ENCODE measurements at regions of chr11 and their contacts with region 1.

Region 1: GRCh38 chr11:72091005-72091691 is 10.5 kb downstream of the LRRC51 start:
- DNase-seq: peak; percentile 52 to 67
- ATAC-seq: peak; percentile 84 to 93
- H3K4me3 ChIP-seq: no peak overlapping the region
- H3K27ac ChIP-seq: peak overlapping the region in 2 of 4 donors; percentile 12 to 18
- H3K4me1 ChIP-seq: peaks cover 4 to 10% of the 10 kb centered on the region in 2 donors
- H3K27me3 ChIP-seq: no peaks in the 10 kb centered on the region
- CTCF ChIP-seq: peak; percentile 84 to 91 (median 88)
- POLR2A ChIP-seq: no peak

Region 2: GRCh38 chr11:71977743-71978418 is 113.3 kb before region 1 on chr11:
- in situ Hi-C with region 1: no loop called
- intact Hi-C with region 1: loop called (anchors 1 kb)
- DNase-seq: peak in 1 of 2 donors; percentile 45
- ATAC-seq: peak; percentile 54 to 79
- H3K4me3 ChIP-seq: no peak overlapping the region
- H3K27ac ChIP-seq: no peak overlapping the region
- H3K4me1 ChIP-seq: peaks cover 3 to 8% of the 10 kb centered on the region in 2 donors
- H3K27me3 ChIP-seq: no peaks in the 10 kb centered on the region
- CTCF ChIP-seq: peak; percentile 39 to 75 (median 69)
- POLR2A ChIP-seq: no peak

Region 3: GRCh38 chr11:72024069-72024754 is 66.9 kb before region 1 on chr11:
- in situ Hi-C with region 1: loop called (anchors 5 to 10 kb)
- intact Hi-C with region 1: loop called (anchors 1 kb)
- DNase-seq: no peak
- ATAC-seq: no peak
- H3K4me3 ChIP-seq: no peak overlapping the region
- H3K27ac ChIP-seq: peak overlapping the region in 1 of 4 donors; percentile 40
- H3K4me1 ChIP-seq: peaks cover 23 to 29% of the 10 kb centered on the region in 2 donors
- H3K27me3 ChIP-seq: no peaks in the 10 kb centered on the region
- CTCF ChIP-seq: no peak
- POLR2A ChIP-seq: no peak

Region 4: DNA sequence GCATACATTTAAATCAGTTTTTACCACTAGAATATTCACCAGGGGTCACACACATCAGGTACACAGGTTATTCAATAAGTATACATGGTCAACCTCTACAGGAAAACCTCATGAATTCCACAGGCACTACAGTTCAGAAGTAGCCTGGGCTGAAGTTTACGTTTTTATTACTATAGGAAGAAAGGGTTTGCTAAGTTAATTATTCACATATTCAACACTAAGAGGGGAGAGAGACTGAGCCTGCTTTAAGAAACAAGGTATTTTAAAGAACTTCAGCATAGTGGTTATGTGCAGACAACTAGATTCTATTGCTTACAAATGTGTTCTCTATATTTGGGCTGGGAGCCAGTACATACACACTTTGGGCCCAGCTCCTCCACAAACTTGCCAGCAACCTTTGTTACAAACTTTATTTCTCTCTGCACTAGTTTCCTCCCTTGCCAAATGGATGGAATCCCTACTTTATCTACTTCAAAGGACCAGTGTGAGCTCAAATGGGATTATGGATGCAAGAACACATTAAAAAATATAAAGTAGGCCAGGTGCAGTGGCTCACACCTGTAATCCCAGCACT is 60.6 kb before region 1 on chr11:
- in situ Hi-C with region 1: loop called in 2 of 4 experiments (anchors 5 to 10 kb)
- intact Hi-C with region 1: loop called (anchors 1 kb)
- DNase-seq: no peak
- ATAC-seq: no peak
- H3K4me3 ChIP-seq: no peak overlapping the region
- H3K27ac ChIP-seq: peak overlapping the region in 1 of 4 donors; percentile 35
- H3K4me1 ChIP-seq: peaks cover 26 to 62% of the 10 kb centered on the region in 2 donors
- H3K27me3 ChIP-seq: no peaks in the 10 kb centered on the region
- CTCF ChIP-seq: no peak
- POLR2A ChIP-seq: no peak

Region 5: DNA sequence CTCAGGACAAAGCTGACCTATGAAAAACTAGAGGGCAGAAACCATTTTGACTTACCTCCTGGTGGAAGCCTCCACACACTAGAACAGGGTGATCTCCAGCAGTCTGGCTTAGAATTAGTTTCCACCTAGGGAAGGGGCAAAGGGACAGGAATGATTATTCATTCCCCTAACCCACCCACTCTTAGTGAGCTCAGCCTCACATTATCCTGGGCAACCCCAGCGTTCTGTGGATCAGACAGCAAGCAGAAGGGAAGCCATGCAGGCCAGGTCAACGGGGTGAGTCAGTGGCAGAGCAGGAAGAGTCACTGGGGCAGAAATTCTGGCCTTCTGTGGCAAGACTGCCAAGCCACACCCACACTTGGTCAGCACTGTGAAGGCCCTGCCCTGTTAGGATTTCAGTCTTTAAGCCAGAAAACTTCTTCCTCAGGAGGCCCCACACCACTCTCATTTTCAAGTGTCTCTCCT is 21.3 kb before region 1 on chr11:
- in situ Hi-C with region 1: no loop called
- intact Hi-C with region 1: no loop called
- DNase-seq: peak; percentile 77 to 88
- ATAC-seq: peak; percentile 98 to 99
- H3K4me3 ChIP-seq: peak overlapping the region in 1 of 4 donors; percentile 5
- H3K27ac ChIP-seq: peak overlapping the region; percentile 66 to 81 (median 74)
- H3K4me1 ChIP-seq: peaks cover 31 to 52% of the 10 kb centered on the region in 2 donors
- H3K27me3 ChIP-seq: no peaks in the 10 kb centered on the region
- CTCF ChIP-seq: no peak
- POLR2A ChIP-seq: peak in 1 of 2 donors; percentile 34